Activated T-helper 1 cell treated with anti-CD3 and anti-CD28 coated beads, Interleukin-12 subunit alpha, Interleukin-12 subunit beta, Interleukin-2, Interleukin-4 antibody, amounts not matched to agents 30 ng/mL and 10 ng/mL and 1 ng/mL, durations not matched to agents 14 hours and 24 hours and 36 hours (primary cell): ENCODE measurements at regions of chr6 and their contacts with region 1.

Region 1: GRCh38 chr6:116561377-116562018 is 7.9 kb downstream of the CALHM4 start:
- DNase-seq: peak; percentile 51
- H3K4me3 Mint-ChIP-seq: no peak overlapping the region
- H3K27ac Mint-ChIP-seq: no peak overlapping the region
- H3K4me1 Mint-ChIP-seq: no peaks in the 10 kb centered on the region
- H3K27me3 Mint-ChIP-seq: peaks cover 12% of the 10 kb centered on the region

Region 2: DNA sequence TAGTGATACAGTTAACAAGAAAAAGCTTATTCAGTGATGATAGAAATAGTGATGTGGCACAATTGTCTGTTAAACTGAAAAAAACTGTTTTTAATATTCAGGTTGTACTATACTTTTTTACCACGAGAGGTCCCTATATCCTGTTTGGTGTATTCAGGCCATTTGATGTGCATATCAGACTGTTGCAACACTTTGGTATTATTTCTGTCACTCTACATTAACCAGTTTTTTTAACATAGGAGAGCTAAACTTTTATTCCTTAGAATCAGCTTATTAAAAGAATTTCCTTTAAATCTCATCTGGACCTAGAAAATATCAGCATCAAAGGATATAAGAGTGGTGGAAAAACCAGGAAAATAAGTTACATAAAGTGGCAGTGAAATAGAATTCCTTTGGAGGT is 344.4 kb before region 1 on chr6:
- intact Hi-C with region 1: loop called (anchors 1 kb)
- DNase-seq: no peak
- H3K4me3 Mint-ChIP-seq: no peak overlapping the region
- H3K27ac Mint-ChIP-seq: no peak overlapping the region
- H3K4me1 Mint-ChIP-seq: no peaks in the 10 kb centered on the region
- H3K27me3 Mint-ChIP-seq: no peaks in the 10 kb centered on the region

Region 3: GRCh38 chr6:116268589-116269293 is 292.8 kb before region 1 on chr6:
- intact Hi-C with region 1: loop called (anchors 1 kb)
- DNase-seq: no peak
- H3K4me3 Mint-ChIP-seq: no peak overlapping the region
- H3K27ac Mint-ChIP-seq: no peak overlapping the region
- H3K4me1 Mint-ChIP-seq: peaks cover 6% of the 10 kb centered on the region
- H3K27me3 Mint-ChIP-seq: no peaks in the 10 kb centered on the region

Region 4: DNA sequence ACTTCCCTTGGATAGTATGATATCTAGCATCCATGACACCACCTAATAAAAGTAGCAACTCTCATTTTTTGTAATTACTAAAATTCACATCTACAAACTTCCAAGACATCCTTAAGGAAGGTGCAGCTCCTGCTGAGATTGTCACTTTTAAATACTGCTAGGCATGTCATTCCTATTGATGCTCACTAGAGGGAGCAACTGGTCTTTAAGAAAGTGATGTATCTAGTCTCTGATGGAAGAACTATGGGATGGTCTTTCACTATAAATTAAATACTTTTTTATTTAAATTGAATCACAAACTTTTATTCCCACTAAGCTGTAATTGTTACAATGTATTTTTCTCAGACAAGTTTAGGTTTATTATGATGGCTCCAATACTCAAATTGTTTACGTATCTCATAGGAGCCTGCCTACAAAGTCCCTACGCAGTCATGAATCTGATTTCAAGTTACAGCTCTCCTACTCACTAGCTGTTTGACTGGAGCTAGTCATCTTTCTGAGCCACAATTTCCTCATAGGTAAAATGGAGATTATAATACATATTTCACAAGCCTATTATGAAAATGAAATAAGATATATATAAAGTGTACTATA is 273.7 kb before region 1 on chr6:
- intact Hi-C with region 1: loop called (anchors 1 kb)
- DNase-seq: no peak
- H3K4me3 Mint-ChIP-seq: no peak overlapping the region
- H3K27ac Mint-ChIP-seq: no peak overlapping the region
- H3K4me1 Mint-ChIP-seq: no peaks in the 10 kb centered on the region
- H3K27me3 Mint-ChIP-seq: peaks cover 9% of the 10 kb centered on the region

Region 5: DNA sequence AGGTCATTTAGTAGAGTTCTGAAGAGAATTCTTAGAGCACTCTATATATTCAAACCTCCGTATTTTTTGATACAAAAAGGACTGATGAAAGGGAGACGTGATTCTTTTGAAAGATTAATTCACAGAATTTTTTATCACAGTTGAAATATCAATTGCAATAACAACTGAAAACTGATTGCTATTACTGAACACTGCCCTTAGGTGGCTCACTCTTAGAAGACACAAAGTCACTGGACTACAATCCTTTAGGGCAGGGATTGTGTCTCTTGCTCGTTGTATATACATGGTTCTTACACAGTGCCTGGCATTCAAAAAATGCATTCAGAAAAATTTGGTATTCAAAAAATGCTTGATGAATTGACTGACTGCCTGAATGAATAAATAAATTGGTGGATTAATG is 117.4 kb before region 1 on chr6:
- intact Hi-C with region 1: loop called (anchors 1 kb)
- DNase-seq: no peak
- H3K4me3 Mint-ChIP-seq: no peak overlapping the region
- H3K27ac Mint-ChIP-seq: no peak overlapping the region
- H3K4me1 Mint-ChIP-seq: peaks cover 26% of the 10 kb centered on the region
- H3K27me3 Mint-ChIP-seq: peaks cover 24% of the 10 kb centered on the region

Region 6: DNA sequence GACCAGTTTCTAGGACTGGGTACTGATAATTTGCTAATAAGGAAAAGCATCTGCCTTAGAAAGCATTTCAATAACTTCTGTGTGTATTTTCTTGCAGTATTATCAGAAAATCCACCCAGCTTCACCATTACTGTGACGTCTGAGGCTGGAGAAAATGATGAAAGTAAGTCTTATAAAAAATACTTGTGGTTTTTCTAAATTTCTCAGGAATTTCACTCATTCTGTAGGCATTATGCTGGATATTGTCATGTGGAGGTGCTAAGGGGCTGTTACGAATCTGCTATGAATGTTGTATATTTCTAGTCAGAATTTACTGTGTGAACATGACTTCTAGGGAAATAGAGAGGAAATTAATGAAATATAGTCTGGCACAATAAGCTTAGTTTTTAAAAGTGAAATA is 18.7 kb after region 1 on chr6:
- intact Hi-C with region 1: no loop called
- DNase-seq: no peak
- H3K4me3 Mint-ChIP-seq: no peak overlapping the region
- H3K27ac Mint-ChIP-seq: no peak overlapping the region
- H3K4me1 Mint-ChIP-seq: peaks cover 14% of the 10 kb centered on the region
- H3K27me3 Mint-ChIP-seq: no peaks in the 10 kb centered on the region